Activated B cell treated with CpG ODN at 0.5 μM for 24 hours (primary cell): ENCODE measurements at regions of chr6 and their contacts with region 1.

Region 1: DNA sequence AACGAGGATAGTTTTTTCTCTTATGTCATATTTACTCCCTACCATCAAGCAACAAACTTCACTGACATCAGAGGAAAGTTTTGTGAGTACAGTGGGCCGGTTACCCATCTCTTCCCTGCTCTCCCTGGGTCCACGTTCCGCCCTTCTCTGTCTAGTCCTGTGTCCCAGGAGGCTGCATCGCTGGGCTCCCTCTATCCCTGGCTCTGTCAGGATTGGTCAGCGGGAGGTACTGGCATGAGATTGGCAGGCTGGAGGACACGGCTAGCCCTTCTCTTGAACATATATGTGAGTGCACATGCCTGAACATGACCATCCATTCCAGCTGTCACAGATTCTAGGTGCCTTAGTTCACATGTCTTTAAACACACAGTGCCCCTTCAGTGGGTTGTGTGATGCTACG is 30.3 kb upstream of the TMEM181 start:
- DNase-seq: no peak
- ATAC-seq: no peak
- H3K4me3 Mint-ChIP-seq: no peak overlapping the region
- H3K27ac Mint-ChIP-seq: no peak overlapping the region
- H3K4me1 Mint-ChIP-seq: no peaks in the 10 kb centered on the region
- H3K27me3 Mint-ChIP-seq: peaks cover 64% of the 10 kb centered on the region
- CTCF ChIP-seq: no peak

Region 2: GRCh38 chr6:159203304-159204005 is 673.8 kb after region 1 on chr6:
- CTCF ChIA-PET with region 1: no interaction called
- POLR2A ChIA-PET with region 1: no interaction called
- intact Hi-C with region 1: loop called (anchors 5 kb)
- DNase-seq: no peak
- ATAC-seq: no peak
- H3K4me3 Mint-ChIP-seq: no peak overlapping the region
- H3K27ac Mint-ChIP-seq: no peak overlapping the region
- H3K4me1 Mint-ChIP-seq: no peaks in the 10 kb centered on the region
- H3K27me3 Mint-ChIP-seq: peaks cover 15% of the 10 kb centered on the region
- CTCF ChIP-seq: no peak